Activated CD4-positive, alpha-beta T cell treated with anti-CD3 and anti-CD28 coated beads for 36 hours (primary cell): ENCODE measurements at regions of chr1 and their contacts with region 1.

Region 1: DNA sequence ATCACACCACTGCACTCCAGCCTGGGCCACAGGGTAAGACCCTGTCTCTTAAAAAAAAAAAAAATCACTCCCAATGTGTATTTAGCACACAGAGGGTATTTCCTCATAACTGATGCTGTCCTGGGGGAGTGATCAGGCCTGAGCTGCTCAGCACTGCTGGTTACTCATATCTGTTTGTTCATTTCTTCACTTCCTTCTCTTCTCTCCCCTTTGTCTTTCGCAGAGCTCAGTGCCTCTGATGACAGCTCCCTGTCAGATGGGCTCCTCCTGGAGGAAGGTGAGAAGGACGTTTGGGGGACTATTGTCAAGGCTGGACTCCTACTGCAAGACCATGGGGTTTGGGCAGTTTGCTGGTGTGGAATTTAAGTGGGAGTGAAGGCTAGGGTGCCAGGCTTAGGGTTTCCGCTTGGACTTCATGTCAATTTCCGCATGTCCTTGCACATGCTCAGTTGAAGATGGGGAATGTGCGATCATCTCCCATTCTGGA is 13.0 kb downstream of the INAVA start:
- DNase-seq: no peak
- ATAC-seq: peak; percentile 25
- H3K4me3 Mint-ChIP-seq: no peak overlapping the region
- H3K27ac Mint-ChIP-seq: no peak overlapping the region
- H3K4me1 Mint-ChIP-seq: peaks cover 11% of the 10 kb centered on the region
- H3K27me3 Mint-ChIP-seq: peaks cover 21% of the 10 kb centered on the region

Region 2: DNA sequence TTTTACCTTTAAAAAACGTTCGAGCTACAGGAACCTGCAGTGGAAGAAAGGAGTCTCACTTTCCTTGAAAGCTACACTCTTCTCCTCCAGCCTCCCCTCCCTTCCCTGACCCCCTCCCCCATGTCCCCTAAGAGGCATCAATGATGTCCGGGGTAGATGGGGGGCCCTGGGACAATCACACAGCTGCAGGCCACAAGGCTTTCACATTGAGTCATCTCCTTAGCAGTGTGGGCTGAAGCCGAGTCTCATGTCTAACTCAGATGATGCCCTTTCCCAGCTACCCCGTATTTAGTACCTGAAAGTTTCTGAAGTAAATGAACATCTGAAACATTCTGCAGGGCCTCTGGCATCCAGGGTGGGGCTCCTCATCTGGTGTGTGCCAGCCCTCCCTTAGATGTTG is 41.1 kb before region 1 on chr1:
- CTCF ChIA-PET with region 1: no interaction called
- POLR2A ChIA-PET with region 1: no interaction called
- intact Hi-C with region 1: loop called (anchors 1 to 5 kb)
- DNase-seq: peak; percentile 75
- ATAC-seq: peak; percentile 84
- H3K4me3 Mint-ChIP-seq: no peak overlapping the region
- H3K27ac Mint-ChIP-seq: no peak overlapping the region
- H3K4me1 Mint-ChIP-seq: peaks cover 48% of the 10 kb centered on the region
- H3K27me3 Mint-ChIP-seq: peaks cover 35% of the 10 kb centered on the region

Region 3: GRCh38 chr1:200890818-200891773 is 16.6 kb before region 1 on chr1:
- CTCF ChIA-PET with region 1: interaction called, 13 read pairs
- POLR2A ChIA-PET with region 1: interaction called, 7 read pairs
- intact Hi-C with region 1: loop called (anchors 1 kb)
- DNase-seq: no peak
- ATAC-seq: no peak
- H3K4me3 Mint-ChIP-seq: peak overlapping the region; percentile 12
- H3K27ac Mint-ChIP-seq: no peak overlapping the region
- H3K4me1 Mint-ChIP-seq: peaks cover 46% of the 10 kb centered on the region
- H3K27me3 Mint-ChIP-seq: peaks cover 35% of the 10 kb centered on the region

Region 4: DNA sequence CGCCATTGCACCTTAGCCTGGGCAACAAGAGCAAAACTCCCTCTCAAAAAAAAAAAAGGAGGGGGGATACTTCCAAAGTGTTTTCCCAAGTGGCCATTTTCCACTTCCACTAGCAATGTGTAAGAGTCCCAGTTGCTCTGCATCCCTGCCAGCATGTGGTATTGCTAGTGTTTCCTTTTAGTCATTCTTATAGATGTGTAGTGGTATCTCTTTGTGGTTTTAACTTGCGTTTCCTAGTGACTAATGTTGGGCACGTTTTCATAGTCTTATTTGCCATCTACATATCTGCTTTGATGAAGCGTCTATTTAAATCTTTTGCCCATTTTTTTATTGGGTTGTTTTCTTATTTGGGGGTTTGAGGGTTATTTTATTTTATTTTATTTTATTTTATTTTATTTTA is 18.2 kb after region 1 on chr1:
- CTCF ChIA-PET with region 1: no interaction called
- POLR2A ChIA-PET with region 1: no interaction called
- intact Hi-C with region 1: loop called (anchors 1 to 2 kb)
- DNase-seq: peak; percentile 46
- ATAC-seq: peak; percentile 96
- H3K4me3 Mint-ChIP-seq: no peak overlapping the region
- H3K27ac Mint-ChIP-seq: no peak overlapping the region
- H3K4me1 Mint-ChIP-seq: peaks cover 8% of the 10 kb centered on the region
- H3K27me3 Mint-ChIP-seq: peaks cover 24% of the 10 kb centered on the region